ENCODE measurements at regions of chr15 and their contacts with region 1.

Region 1: DNA sequence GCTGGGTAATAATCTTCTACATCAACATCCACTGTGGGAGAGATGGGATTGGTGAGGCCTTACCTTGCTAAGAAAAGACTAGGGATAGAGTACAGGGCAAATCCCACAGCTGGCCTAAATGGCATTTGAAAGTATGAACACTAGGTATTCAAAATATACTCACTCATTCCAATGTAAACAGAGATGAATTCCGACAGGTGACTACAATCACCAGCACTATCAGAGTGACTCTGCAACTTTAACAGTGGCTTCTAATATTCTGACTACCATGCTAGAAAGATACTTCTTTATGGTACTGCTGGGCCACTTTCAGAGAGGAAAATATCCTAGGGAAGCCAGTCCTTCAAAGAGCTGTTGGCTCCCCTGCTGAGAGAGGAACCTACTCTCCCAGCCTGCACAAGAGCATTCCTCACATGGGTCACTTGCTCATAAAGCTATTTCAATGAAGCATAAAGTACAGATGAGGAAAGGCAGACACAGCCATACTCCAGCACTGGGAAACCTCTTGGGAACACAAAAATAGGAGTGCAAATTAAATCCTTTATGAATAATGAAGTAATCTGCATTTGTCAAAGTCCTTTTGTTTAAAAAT is 21.5 kb upstream of the MAN2C1 start:
- DNase-seq: peak in 1 of 2 experiments; percentile 60
- ATAC-seq: peak; percentile 45 to 55; a peak in 4 of 6 replicates
- H3K4me3 ChIP-seq: no peak overlapping the region
- H3K27ac ChIP-seq: peak overlapping the region; percentile 41 to 75
- H3K4me1 ChIP-seq: peaks cover 21% of the 10 kb centered on the region
- CTCF ChIP-seq: no peak
- EP300 ChIP-seq: no peak
- POLR2A ChIP-seq: no peak
- RAD21 ChIP-seq: no peak

Region 2: DNA sequence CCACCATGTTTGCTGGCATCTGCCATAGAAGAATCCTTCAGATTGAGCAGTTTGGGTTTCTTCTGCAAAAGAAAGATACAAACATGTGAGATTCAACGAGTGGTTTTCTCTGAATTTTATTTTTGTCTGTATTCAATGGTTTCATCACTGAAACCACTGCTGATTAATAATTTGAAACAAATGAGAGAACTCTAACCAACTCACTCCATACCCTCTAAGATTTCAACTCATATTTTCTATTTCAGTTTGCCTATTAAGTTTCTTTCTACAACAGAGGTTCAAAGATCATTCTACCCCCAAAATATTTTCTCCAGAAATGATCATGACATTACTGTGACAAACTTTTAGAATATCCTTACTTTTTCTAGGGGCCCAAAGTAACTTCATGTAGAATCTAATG is 17.2 kb after region 1 on chr15:
- CTCF ChIA-PET with region 1: interaction called, 4 read pairs
- POLR2A ChIA-PET with region 1: interaction called, 11 read pairs
- DNase-seq: no peak
- ATAC-seq: no peak
- H3K4me3 ChIP-seq: no peak overlapping the region
- H3K27ac ChIP-seq: no peak overlapping the region
- H3K4me1 ChIP-seq: no peaks in the 10 kb centered on the region
- CTCF ChIP-seq: no peak
- EP300 ChIP-seq: no peak
- POLR2A ChIP-seq: no peak
- RAD21 ChIP-seq: no peak

Measured in A549 (cell line).